Prostate gland (tissue), 2 donors: ENCODE measurements at regions of chrX and their contacts with region 1.

Region 1: DNA sequence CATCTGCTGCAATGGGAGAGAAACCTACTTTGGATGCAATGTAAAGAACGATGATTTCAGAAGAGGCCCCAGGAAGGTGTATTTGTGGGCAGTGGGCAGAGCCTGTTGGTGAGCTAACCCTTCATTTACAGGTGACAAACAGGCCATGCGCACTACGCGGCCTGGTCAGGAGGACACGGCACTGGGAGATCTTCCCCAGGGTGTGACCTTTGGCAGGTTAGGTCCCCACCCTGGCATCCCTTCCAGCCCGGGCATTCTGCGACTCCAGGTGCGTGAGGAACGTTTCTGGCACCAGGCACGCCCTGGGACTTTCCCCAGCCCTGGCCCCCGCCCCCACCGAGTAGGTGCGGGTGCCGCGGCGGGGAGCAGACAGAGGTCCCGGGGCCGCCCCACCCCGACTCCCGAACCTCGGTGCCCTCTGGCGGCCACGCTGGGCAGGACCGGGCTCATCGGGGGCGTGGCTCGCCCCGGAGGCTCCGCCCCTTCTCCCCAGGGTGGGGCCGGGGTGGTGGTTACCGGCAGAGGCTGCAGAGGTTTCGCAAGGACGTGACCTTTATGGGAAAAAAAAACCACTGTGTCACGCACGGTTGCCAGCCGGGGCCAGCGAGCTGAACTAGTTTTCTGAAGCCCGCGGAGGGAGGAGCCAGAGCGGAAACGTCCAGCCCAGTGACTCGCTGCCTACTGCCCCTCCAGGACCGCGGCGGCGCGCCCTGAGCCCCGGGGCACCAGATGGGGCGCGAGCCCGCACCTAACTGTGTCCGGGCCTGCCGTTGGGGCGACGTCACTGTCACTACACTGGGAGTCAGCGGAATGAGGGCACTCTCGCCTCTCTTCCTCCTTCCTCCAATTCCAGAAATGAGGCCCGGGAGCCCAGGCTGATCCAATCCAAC is 5.0 kb upstream of the NYX start:
- DNase-seq: peak; percentile 60
- H3K4me3 ChIP-seq: peak overlapping the region; percentile 3 to 20
- H3K27ac ChIP-seq: peak overlapping the region; percentile 15 to 37
- H3K4me1 ChIP-seq: no peaks in the 10 kb centered on the region
- H3K27me3 ChIP-seq: no peaks in the 10 kb centered on the region
- CTCF ChIP-seq: peak; percentile 28 to 72 (median 47)
- POLR2A ChIP-seq: peak; percentile 22

Region 2: DNA sequence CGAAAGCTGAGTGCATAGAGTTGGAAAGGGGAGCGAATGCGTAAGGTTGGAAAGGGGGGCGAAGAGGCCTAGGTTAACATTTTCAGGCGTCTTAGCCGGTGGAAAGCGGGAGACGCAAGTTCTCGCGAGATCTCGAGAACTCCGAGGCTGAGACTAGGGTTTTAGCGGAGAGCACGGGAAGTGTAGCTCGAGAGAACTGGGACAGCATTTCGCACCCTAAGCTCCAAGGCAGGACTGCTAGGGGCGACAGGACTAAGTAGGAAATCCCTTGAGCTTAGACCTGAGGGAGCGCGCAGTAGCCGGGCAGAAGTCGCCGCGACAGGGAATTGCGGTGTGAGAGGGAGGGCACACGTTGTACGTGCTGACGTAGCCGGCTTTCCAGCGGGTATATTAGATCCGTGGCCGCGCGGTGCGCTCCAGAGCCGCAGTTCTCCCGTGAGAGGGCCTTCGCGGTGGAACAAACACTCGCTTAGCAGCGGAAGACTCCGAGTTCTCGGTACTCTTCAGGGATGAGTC is 108.4 kb before region 1 on chrX and contains the start of gene DDX3X:
- intact Hi-C with region 1: loop called (anchors 5 kb)
- DNase-seq: peak; percentile 76
- H3K4me3 ChIP-seq: peak within 1 kb of the TSS; percentile 73 to 78
- H3K27ac ChIP-seq: peak within 1 kb of the TSS; percentile 98 to 99
- H3K4me1 ChIP-seq: no peaks in the 10 kb centered on the region
- H3K27me3 ChIP-seq: no peaks in the 10 kb centered on the region
- CTCF ChIP-seq: peak in 2 of 4 experiments; percentile 36 to 53
- POLR2A ChIP-seq: peak; percentile 79
- total RNA-seq, gene DDX3X: 107 to 115 TPM

Region 3: DNA sequence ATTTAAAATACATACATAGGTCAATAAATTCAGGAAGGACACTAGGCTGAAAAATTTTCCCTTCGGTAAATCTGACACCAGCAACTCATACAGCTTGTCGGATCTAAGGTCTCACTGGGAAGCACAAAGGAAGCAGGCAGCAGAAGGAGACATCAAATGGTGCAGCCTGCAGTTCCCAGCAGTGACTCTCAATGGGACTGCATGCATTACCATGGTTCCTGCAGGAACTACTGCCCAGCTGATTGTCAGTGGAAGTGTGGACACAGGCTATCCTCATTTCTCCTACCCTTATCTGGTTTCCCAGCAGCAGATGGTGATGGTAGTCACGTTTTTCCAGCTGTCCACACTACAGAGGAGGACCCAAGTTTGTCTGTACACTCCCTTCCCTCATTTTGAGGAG is 1222.5 kb after region 1 on chrX:
- intact Hi-C with region 1: no loop called
- DNase-seq: no peak
- H3K4me3 ChIP-seq: no peak overlapping the region
- H3K27ac ChIP-seq: no peak overlapping the region
- H3K4me1 ChIP-seq: no peaks in the 10 kb centered on the region
- H3K27me3 ChIP-seq: no peaks in the 10 kb centered on the region
- CTCF ChIP-seq: no peak
- POLR2A ChIP-seq: no peak